Activated CD8-positive, alpha-beta T cell treated with anti-CD3 and anti-CD28 coated beads, Interleukin-2, amount 10 ng/mL, durations not matched to agents 7 days and 5 days (primary cell): ENCODE measurements at regions of chr1 and their contacts with region 1.

Region 1: DNA sequence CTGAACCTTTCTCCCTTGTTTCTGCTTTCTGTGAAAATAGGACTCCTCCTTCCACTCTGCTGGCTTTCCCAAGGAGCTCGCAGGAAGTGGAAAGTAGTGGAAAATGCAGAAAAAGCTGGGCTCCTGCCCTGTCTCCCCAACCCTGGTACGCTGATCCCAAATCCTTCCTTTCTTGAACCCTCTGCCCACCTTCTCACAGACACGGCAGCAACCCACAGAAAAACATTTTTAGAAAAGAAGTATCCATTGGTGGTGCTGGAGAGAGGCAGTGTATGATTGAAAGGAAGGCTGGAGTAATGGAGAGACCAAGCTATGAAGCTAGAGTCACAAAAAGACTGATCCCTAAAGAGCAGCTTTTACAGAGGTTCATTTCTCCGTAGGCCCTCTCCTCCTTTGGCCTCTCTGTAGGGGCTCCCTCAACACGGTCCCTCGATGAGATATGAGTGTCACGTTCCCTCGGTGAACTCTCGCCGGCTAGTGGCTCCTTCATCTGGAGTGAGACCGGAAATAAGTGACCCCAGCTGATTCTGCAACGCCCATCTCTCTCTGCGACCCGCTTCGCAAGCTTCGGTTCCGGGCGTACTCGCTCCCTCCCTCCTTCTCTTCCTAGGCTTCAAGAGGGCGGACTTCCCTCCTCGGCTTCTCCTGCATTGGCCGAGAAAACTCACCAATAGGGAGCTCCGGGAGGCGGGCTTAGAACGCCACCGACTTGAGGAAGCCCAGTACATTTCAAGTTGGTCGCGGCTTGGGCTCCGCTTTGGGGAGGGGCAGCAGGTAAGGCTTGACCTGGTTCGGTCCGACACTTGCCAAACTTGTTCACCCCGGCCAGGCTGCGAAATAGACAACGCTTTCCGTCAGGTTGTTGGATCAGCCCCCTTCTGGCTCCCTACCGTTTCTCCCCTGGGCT is at the starts of genes ANKRD34A and POLR3GL:
- DNase-seq: peak; percentile 96
- ATAC-seq: peak; percentile 92
- H3K4me3 Mint-ChIP-seq: peak within 1 kb of the TSS; percentile 93
- H3K27ac Mint-ChIP-seq: peak within 1 kb of the TSS; percentile 91
- H3K4me1 Mint-ChIP-seq: peaks cover 50% of the 10 kb centered on the region
- H3K27me3 Mint-ChIP-seq: no peaks in the 10 kb centered on the region
- total RNA-seq, gene ANKRD34A: 1.8 to 2.4 TPM
- total RNA-seq, gene POLR3GL: 25.0 to 26.5 TPM

Region 2: GRCh38 chr1:145891587-145892485 is 72.4 kb before region 1 on chr1:
- CTCF ChIA-PET with region 1: interaction called, 19 read pairs
- POLR2A ChIA-PET with region 1: interaction called, 3 read pairs
- DNase-seq: peak; percentile 62
- ATAC-seq: peak; percentile 78
- H3K4me3 Mint-ChIP-seq: no peak overlapping the region
- H3K27ac Mint-ChIP-seq: peak overlapping the region; percentile 40
- H3K4me1 Mint-ChIP-seq: peaks cover 1% of the 10 kb centered on the region
- H3K27me3 Mint-ChIP-seq: no peaks in the 10 kb centered on the region

Region 3: DNA sequence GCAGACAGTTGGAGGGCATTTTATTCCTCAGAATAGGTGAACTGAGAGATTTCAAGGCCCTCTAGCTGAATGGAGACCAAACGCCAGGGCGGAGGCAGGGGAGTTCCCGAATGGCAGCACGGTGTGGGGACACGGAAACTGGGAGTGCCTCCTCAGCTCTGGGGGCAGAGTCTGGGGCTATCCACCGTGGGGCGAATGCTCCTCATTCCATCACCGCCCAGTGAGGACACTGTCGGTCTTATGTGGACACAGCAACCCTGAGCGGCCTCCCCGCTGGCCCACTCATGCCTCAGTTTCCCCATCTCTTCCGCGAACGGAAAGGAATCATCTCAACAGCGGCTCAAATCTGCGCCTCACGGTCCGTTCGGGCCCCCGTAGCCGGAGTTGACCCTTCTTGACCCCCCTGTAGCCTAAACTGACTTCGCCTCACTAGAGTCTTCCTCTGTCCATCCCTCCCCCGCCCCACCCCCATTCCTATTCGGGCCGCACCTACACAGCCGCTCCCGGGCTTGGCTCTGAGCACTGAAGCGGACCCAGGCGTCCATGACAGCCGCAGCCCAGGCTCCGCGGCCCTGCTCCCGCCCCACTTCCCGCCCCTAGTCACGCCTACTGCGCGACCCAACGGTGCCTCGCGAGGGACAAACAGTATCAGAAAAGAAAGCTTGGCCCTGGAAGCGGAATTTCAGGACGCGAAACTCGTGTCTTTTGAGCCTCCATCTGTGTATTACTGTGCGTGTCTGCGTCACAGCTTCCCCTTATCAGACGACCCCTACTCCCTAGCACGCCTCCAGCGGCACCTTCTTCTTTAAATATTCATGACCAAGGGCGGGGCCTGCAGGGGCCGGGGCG is 45.9 kb before region 1 on chr1 and contains the start of gene PEX11B:
- CTCF ChIA-PET with region 1: interaction called, 6 read pairs
- POLR2A ChIA-PET with region 1: interaction called, 10 read pairs
- DNase-seq: peak; percentile 94
- ATAC-seq: peak; percentile 94
- H3K4me3 Mint-ChIP-seq: peak within 1 kb of the TSS; percentile 92
- H3K27ac Mint-ChIP-seq: peak within 1 kb of the TSS; percentile 99
- H3K4me1 Mint-ChIP-seq: peaks cover 34% of the 10 kb centered on the region
- H3K27me3 Mint-ChIP-seq: no peaks in the 10 kb centered on the region
- total RNA-seq, gene PEX11B: 33.3 to 35.9 TPM

Region 4: DNA sequence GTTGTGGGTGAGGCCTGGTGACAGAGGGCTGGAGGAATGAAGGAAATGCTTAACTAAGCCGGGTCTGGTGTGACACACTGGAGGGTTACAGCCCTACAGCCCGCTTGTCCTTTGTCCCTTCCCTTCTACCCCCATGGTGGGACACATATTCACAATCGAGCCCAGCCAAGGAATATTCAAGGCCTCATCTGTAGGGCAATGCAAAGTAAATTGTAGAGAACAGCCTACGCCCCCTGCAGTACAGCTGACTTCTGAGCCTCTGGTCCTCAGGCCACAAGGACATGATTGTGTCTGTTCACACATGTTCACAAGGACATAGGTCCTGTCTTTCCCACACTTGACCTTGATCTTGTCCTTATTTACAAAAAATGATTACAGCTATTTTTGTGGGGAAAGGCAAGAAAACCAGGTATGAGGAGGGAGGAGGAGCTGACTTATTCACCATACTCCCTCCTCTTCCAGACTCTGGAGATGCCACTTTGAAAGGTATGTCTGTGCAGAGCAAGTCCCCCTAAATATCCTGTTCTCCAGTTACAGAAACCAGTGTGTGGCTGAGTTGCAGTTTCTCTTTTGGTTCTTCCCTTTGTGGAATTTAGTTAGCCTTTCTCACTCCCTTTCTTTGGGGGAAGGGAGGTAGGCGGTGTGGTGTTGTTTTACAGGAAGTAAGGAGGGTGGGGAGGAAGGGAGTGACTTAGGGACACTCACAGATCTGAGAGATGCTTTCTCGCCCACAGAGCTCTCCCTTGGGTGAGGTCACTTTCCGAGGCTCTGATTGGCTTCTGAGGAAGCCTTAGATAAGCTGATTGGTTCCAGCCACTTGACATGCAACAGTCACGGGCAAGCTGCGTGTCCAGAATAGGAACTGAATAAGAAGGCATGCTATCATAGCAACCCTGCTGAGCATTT is 14.9 kb after region 1 on chr1:
- CTCF ChIA-PET with region 1: interaction called, 98 read pairs
- POLR2A ChIA-PET with region 1: interaction called, 58 read pairs
- DNase-seq: peak; percentile 93
- ATAC-seq: peak; percentile 89
- H3K4me3 Mint-ChIP-seq: no peak overlapping the region
- H3K27ac Mint-ChIP-seq: no peak overlapping the region
- H3K4me1 Mint-ChIP-seq: peaks cover 16% of the 10 kb centered on the region
- H3K27me3 Mint-ChIP-seq: no peaks in the 10 kb centered on the region

Region 5: GRCh38 chr1:145996433-145997015 is 32.3 kb after region 1 on chr1 and contains the start of gene TXNIP:
- CTCF ChIA-PET with region 1: interaction called, 14 read pairs
- POLR2A ChIA-PET with region 1: interaction called, 25 read pairs
- DNase-seq: peak; percentile 97
- ATAC-seq: peak; percentile 94
- H3K4me3 Mint-ChIP-seq: peak within 1 kb of the TSS; percentile 87
- H3K27ac Mint-ChIP-seq: peak within 1 kb of the TSS; percentile 95
- H3K4me1 Mint-ChIP-seq: peaks cover 59% of the 10 kb centered on the region
- H3K27me3 Mint-ChIP-seq: no peaks in the 10 kb centered on the region
- total RNA-seq, gene TXNIP: 190 to 195 TPM

Region 6: GRCh38 chr1:146036965-146037646 is 72.9 kb after region 1 on chr1:
- CTCF ChIA-PET with region 1: interaction called, 6 read pairs
- POLR2A ChIA-PET with region 1: interaction called, 11 read pairs
- DNase-seq: peak; percentile 88
- ATAC-seq: peak; percentile 52
- H3K4me3 Mint-ChIP-seq: peak overlapping the region; percentile 91
- H3K27ac Mint-ChIP-seq: peak overlapping the region; percentile 95
- H3K4me1 Mint-ChIP-seq: peaks cover 48% of the 10 kb centered on the region
- H3K27me3 Mint-ChIP-seq: peaks cover 6% of the 10 kb centered on the region